Posterior vena cava (tissue), 2 donors: ENCODE measurements at regions of chr9 and their contacts with region 1.

Region 1: DNA sequence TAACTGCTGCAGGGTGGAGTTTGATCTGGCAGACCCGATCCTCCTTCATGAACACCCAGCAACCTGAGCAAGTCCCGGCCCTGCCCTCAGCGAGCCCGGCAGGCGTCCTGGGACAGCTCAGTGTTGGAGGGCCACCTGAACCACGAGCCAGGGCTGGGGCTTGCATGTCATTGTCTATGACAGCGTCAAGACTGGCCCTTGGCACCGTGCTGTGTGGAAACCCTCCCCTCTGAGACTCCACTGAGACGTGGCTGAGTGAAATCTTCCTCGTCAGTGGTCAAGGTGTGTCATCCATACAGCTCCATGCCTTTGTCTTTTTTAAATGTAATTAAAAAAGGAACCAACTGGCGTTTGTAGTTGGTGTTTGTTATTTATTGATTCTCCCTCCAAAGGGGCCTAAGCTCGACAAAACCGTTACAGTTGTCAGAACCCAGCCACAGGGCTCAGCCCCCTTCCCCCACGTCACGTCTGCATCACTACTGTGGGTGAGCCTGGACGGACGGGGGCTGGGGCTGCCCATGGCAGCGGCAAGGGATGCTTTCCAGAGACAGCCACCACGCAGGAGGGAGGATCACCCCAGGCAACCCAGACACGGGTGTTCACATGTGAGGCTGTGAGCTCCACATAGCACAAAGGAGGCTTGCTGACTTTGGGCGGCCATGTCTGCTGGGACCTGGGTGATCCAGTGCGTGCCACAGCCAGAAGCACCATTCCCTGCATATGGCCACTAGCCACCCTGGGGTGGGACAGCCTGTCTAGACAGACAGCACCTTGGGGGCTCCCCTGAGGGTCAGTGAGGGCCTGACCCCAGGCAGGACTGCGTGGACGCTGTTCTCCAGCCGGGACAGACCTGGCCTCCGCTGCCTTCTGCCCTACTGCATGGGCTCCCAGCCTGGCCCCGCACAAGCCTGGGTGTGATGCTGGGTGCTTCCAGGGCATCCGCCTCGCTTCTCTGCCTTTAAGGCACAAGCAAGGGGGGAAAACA is 7.3 kb downstream of the UCK1 start:
- DNase-seq: peak; percentile 75

Region 2: GRCh38 chr9:131799177-131799823 is 275.6 kb after region 1 on chr9:
- intact Hi-C with region 1: no loop called
- DNase-seq: no peak

Region 3: DNA sequence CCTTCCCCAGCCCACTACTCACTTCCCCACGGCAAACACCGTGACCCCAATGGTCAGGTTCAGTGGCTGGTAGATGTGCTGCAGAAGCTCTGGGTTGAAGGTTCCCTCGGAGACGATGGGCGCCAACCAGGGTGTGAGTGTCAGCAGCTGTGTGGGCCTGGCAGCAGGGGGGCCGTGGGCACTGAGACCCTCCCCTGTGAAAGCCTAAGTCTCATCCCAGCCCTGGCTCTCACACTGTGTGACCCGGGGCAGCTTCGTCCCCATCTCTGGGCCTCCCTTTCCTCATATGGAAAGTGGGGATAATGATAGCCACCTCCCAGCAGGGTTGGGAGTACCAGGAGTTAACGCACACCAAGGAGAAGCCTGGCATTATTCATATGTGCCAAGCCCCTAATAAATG is 1631.4 kb after region 1 on chr9:
- intact Hi-C with region 1: loop called in 1 of 2 experiments (anchors 5 kb)
- DNase-seq: peak; percentile 64